ENCODE measurements at regions of chr12 and their contacts with region 1.

Region 1: GRCh38 chr12:100356644-100357223 is at the start of gene SLC17A8:
- DNase-seq: no peak
- ATAC-seq: peak; percentile 34
- total RNA-seq, gene SLC17A8: not detected

Region 2: GRCh38 chr12:100251917-100252316 is 104.8 kb before region 1 on chr12:
- intact Hi-C with region 1: no loop called
- DNase-seq: no peak
- ATAC-seq: no peak

Region 3: DNA sequence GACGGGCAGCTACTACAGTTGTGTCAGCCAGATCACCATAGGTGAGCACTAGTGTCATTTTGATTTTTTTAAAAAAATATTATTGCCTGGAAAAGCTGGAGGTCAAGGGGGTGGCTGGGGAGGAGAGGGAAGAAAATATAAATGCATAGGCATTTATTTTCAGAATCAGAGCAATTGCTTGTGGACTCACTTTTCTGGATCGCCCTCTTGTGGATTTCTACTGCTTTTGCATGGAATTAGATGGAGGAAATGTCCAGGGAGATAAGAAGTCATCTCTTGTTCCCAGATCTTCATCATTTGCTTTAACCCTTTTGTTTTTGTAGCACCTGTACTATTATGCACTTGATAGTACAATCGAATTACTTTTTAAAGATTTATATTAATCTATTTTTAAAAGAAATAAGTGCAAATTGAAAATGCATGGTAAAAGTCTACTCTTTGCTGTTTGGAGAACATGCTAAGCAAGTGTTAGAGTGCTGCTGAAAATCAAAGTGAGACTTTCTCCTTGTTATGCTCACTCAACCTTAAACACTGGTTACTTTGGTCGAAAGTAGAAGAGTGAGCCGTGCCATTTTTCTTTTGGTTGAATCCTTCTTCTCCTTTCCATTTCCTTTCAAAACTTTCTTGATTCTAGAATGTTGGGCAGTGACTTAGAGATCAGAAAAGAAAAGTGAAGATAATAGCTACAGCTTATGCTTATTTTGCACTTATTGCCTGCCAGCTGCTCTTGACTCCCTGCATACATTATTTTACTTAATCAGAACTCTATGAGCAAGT is 377.3 kb after region 1 on chr12:
- intact Hi-C with region 1: loop called (anchors 10 kb)
- DNase-seq: no peak
- ATAC-seq: no peak